ENCODE measurements at regions of chr1 and their contacts with region 1.

Region 1: DNA sequence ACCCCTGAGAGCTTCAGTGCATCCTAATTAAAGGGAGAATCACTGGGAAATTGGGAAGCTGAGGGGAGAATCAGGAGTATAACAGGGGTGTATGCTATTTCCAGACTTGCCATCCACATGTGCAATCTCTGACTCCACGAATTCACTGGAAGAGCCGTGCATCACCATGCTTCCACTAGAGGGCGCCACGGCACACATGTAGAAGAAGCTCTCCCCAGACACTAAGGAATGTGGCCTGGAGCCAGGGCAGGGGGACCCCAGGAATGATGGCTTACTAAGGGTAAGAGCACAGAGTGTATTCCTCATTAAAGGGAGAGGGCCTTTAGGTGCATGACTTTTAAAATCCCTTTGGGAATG is 81.5 kb downstream of the ABCA4 start:
- DNase-seq: peak; percentile 88
- H3K4me3 ChIP-seq: no peak overlapping the region
- H3K27ac ChIP-seq: peak overlapping the region; percentile 98
- H3K4me1 ChIP-seq: peaks cover 43% of the 10 kb centered on the region
- H3K27me3 ChIP-seq: no peaks in the 10 kb centered on the region
- CTCF ChIP-seq: peak; percentile 86 to 97
- POLR2A ChIP-seq: no peak

Region 2: DNA sequence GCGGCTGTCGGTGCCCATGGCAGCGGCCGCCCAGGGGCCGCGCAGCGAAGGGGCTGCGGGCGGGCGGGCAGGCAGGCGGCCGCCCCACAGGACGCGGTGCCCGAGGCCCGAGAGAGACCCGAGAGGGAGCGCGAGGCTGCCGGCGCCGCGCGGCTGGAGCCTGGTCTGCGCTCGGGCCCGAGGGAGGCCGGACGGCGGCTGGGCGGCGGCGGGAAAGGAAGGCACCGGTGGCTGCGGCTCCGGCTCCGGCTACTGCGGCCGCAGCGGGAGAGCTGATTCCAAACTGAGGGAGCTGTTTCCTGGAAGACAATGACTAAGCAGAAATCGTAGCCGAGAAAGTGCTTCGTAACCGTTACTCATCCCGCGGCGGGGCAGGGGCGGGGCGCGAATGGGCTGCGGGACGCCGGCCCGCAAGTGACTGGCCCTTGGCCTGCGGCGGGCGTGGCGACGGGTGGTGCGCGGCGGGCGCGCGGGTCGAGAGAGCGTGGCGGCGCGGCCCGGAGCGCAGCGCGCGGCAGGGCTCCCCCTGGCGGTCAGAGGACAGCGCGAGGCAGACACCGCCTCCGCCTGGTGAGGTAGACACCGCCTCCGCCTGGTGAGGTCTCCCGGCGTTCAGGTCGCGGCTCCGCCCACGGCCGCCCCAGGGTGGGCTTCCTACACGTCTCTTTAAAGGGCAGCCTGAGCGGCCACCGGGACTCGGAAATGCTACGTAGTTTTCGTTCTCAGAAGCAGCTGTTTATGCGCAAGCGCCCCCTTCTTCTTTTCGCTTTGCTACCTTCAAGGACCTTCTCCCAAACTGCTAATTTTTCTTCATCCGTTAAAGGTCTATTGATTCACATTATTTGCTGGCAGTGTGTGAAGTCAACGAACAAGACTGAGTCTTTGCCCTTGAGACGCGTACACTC is 130.1 kb before region 1 on chr1 and contains the start of gene GCLM:
- CTCF ChIA-PET with region 1: interaction called, 17 read pairs
- POLR2A ChIA-PET with region 1: interaction called, 4 read pairs
- dilution Hi-C with region 1: no loop called
- intact Hi-C with region 1: no loop called
- DNase-seq: peak; percentile 97
- H3K4me3 ChIP-seq: peak within 1 kb of the TSS; percentile 70 to 90 (median 82)
- H3K27ac ChIP-seq: peak within 1 kb of the TSS; percentile 69
- H3K4me1 ChIP-seq: peaks cover 39% of the 10 kb centered on the region
- H3K27me3 ChIP-seq: no peaks in the 10 kb centered on the region
- CTCF ChIP-seq: peak; percentile 86 to 99
- POLR2A ChIP-seq: peak; percentile 63
- total RNA-seq, gene GCLM: 45.6 and 55.9 TPM in 2 replicates

Region 3: GRCh38 chr1:94068999-94069918 is 29.8 kb after region 1 on chr1:
- CTCF ChIA-PET with region 1: interaction called, 71 read pairs
- POLR2A ChIA-PET with region 1: interaction called, 8 read pairs
- dilution Hi-C with region 1: no loop called
- intact Hi-C with region 1: loop called (anchors 1 kb)
- DNase-seq: peak; percentile 98
- H3K4me3 ChIP-seq: no peak overlapping the region
- H3K27ac ChIP-seq: peak overlapping the region; percentile 100
- H3K4me1 ChIP-seq: peaks cover 77% of the 10 kb centered on the region
- H3K27me3 ChIP-seq: no peaks in the 10 kb centered on the region
- CTCF ChIP-seq: no peak
- POLR2A ChIP-seq: no peak

Region 4: DNA sequence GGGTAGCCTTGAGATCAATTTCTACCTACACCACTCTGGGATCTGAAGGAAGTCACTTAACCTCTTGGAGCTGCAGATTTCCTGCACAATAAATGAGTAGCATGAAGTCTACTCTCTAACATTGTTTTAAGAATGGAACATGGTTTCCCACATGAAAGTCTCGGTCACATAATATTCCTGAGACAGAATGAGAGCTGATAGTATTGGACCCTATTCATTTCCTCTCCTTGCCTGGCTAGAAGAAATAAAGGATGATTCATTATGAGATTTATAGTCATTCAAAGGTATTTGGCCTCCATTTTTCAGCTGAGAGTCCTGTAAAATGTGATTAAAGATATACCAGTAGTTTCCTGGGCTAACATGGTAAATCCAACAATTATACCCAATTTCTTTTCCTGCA is 141.2 kb after region 1 on chr1:
- CTCF ChIA-PET with region 1: interaction called, 20 read pairs
- POLR2A ChIA-PET with region 1: no interaction called
- dilution Hi-C with region 1: no loop called
- intact Hi-C with region 1: no loop called
- DNase-seq: peak; percentile 49
- H3K4me3 ChIP-seq: no peak overlapping the region
- H3K27ac ChIP-seq: peak overlapping the region; percentile 18
- H3K4me1 ChIP-seq: peaks cover 36% of the 10 kb centered on the region
- H3K27me3 ChIP-seq: no peaks in the 10 kb centered on the region
- CTCF ChIP-seq: no peak
- POLR2A ChIP-seq: no peak

Region 5: DNA sequence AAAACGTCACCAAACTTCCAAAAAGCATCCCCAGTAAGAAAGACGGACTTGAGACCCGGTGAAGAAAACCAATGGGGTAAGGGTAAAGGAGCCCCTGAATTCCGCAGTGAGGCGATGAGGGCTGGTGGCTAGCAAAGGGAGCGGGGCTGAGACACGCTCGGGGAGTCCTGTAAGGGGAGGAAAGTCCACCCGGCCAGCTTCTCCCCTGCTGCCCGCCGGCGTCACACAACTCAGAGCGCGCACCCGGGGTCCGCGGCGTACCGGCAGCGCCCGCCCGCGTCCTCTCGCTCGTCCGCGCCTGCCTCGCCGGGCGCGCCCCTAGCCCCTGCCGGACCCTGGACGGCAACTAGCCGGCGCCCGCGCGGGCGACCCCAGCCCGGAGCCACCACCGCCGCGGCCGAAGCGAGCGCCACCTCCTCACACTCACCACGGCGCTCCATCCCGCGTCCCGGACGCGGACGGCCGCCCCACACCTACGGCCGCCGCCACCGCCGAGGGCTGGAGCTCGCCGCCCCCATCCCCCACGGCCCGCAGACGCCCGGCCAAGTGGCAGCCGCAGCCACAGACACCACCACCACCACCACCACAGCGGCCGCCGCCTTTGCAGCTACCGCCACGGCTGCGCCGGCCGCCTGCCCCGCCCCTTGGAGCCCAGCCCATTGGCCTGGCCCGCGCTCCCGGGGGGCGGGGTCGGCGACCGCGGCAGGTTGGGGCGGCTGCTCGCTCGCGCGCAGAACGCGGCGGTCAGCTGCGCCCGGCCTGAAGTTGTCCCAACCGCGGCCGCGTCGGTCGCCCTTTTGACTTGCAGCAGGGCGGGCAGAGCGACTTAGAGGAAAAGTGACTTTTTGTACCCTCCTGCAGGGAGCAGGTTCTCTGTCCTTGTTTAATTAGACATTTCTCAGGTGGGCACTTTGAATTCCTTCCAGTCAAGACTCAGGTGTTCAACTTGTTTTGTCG is 207.9 kb after region 1 on chr1:
- CTCF ChIA-PET with region 1: interaction called, 24 read pairs
- POLR2A ChIA-PET with region 1: interaction called, 3 read pairs
- dilution Hi-C with region 1: no loop called
- intact Hi-C with region 1: no loop called
- DNase-seq: peak; percentile 80
- H3K4me3 ChIP-seq: peak overlapping the region; percentile 58 to 98 (median 75)
- H3K27ac ChIP-seq: peak overlapping the region; percentile 90
- H3K4me1 ChIP-seq: peaks cover 23% of the 10 kb centered on the region
- H3K27me3 ChIP-seq: no peaks in the 10 kb centered on the region
- CTCF ChIP-seq: no peak
- POLR2A ChIP-seq: peak; percentile 95

Region 6: GRCh38 chr1:94463765-94464330 is 424.4 kb after region 1 on chr1:
- CTCF ChIA-PET with region 1: interaction called, 11 read pairs
- POLR2A ChIA-PET with region 1: no interaction called
- dilution Hi-C with region 1: no loop called
- intact Hi-C with region 1: no loop called
- DNase-seq: peak; percentile 74
- H3K4me3 ChIP-seq: no peak overlapping the region
- H3K27ac ChIP-seq: no peak overlapping the region
- H3K4me1 ChIP-seq: no peaks in the 10 kb centered on the region
- H3K27me3 ChIP-seq: no peaks in the 10 kb centered on the region
- CTCF ChIP-seq: peak in 1 of 2 donors; percentile 47
- POLR2A ChIP-seq: no peak

Measured in endothelial cell of umbilical vein (primary cell).